Aorta (tissue), 5 donors: ENCODE measurements at regions of chr2 and their contacts with region 1.

Region 1: DNA sequence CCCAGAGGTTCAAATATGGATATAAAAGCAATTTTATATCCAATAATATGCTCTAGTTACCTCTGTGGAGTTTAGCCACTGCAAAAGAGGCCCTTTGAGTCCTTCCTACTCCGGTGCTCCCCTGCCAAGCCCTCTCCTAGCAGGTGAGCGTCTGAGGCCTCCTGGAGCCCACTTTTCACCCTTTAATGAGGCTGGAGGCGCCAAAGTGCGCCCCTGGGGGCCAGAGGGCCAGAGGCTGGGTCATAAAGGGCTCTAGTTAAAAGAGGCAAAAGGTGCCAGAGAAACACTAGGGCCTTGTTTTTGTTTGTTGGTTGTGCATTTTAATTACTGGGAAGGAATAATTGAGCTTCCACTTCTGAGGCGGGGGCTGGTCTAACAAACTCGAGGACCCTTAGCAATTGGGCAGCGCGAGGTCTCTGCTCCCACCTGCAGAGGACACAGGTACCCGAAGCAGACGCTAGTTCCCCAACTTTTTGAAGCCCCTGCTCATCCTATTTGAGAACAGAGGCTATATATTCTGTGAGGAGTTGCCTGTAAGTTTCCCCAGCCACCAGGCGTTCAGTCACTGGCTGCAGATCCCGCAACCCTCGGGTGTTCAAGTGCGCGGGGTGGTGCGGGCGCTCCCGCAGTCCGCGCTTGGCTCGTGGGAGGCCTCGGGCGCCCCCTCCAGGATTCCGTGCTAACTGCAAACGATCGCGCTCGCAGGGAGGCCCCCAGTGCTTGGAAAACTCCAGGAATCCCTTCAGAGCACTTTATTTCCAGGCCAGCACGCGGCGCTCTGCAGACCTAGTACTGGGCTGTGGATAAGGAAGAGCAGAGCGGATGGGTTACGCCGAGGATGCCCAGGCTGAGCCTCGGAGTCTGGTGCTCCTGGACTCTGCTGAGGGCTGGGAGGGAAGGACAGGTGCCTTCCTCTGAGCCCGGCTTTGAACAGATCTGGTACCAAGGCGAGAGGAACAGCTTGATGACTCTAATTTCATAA is 14.1 kb downstream of the MSGN1 start:
- DNase-seq: peak; percentile 77 to 86
- ATAC-seq: peak; percentile 77
- H3K4me3 ChIP-seq: no peak overlapping the region
- H3K27ac ChIP-seq: no peak overlapping the region
- H3K4me1 ChIP-seq: peaks cover 0 to 2% of the 10 kb centered on the region in 2 donors
- H3K27me3 ChIP-seq: no peaks in the 10 kb centered on the region

Region 2: DNA sequence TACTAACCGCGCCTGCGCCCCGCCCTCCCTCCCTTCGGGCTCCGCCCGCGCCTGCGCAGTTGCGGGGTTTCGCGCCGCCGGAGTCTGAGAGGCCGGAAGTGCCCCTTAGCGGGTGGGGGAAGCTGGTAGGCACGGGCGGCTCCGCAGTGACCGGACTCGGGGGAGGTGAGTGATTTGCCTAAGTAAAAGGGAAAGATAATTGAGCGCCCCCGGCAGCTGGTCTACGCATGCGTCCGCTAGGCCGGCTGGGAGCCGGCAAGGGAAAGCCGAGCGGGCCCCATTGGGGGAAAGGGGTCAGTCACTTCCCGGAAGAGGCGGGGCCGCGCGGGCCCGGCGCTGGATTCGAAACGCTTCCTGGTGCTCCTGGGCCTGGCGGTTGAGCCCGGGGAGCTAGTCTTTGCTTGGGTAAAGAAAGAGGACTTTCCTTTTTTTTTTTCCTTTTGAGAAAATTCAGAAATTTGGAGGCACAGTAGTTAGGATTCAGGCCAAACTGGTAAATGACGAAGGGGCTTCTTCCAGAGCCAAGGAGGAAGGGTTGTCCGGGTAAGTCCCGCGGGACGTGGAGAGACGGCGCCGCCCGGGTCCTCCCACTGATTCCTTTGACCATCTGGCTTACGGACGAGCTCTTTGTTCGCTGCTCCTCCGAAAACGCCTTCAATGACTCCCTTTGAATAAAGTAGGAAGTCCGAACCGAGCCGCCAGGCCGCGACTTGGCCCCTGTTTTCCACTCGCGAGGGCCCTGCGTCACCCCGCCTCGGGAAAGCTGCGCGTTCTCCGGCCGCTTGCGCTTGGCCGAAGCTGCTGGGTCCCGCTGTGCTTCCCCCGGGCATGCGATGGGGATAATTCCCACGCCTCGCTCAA is 76.3 kb before region 1 on chr2 and contains the starts of genes GEN1 and SMC6:
- intact Hi-C with region 1: loop called in 1 of 2 experiments (anchors 5 kb)
- DNase-seq: peak; percentile 93 to 97
- ATAC-seq: peak; percentile 99
- H3K4me3 ChIP-seq: peak within 1 kb of the TSS; percentile 85 to 88
- H3K27ac ChIP-seq: peak within 1 kb of the TSS; percentile 3 to 81
- H3K4me1 ChIP-seq: peaks cover 0 to 5% of the 10 kb centered on the region in 2 donors
- H3K27me3 ChIP-seq: no peaks in the 10 kb centered on the region
- total RNA-seq, gene GEN1: 3.5 to 5.5 TPM
- total RNA-seq, gene SMC6: 11.6 to 17.2 TPM

Region 3: DNA sequence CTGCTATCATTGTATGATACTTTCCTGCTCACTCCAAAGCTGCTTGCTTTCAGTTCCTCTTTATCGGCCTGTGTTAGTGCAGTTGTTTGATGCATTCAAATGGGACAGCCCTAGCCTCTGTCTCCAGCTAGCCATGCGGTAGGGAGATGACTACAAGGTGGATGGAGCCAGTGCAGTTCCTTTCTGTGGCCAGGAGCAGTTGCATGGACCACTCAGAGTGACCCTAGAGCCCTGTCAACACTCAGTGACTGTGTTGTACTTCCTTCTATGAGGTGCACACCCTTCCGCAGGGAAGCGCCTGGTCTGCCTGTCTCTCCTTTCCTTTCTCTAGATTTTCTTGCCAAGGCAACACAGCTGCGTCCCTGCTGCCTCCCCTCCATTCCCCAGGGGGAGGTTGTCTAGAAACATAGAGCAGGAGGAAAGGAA is 81.9 kb after region 1 on chr2:
- intact Hi-C with region 1: no loop called
- DNase-seq: no peak
- ATAC-seq: no peak
- H3K4me3 ChIP-seq: no peak overlapping the region
- H3K27ac ChIP-seq: no peak overlapping the region
- H3K4me1 ChIP-seq: no peaks in the 10 kb centered on the region
- H3K27me3 ChIP-seq: no peaks in the 10 kb centered on the region